ENCODE measurements at regions of chr12 and their contacts with region 1.

Region 1: DNA sequence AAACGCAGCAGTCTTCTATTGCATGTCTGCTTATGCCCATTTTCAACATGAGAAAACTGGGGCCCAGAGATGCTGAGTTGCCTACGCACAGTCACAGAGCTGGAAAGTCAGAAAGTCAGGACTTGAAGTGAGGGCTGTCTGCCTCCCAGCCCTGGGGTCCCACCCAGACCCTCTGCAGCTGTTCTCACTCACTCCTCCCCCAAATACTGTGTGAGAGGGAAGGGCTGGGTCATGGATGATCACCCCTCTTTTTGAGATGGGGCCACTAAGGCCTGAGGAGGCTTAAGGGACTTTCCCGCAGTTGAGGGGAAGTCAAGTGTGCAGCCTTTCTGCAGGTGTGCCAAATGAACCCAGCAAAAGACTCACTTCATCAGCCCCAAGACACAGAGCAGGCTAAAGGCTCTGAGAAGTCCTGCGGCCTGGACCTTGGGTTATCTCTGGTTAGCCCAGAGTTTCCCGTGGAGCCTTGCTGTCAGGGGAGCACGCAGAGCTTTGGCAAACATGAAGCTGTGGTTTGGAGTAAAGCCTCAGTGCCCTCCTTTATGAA is 18.7 kb downstream of the DTX1 start:
- DNase-seq: peak; percentile 84
- CTCF ChIP-seq: no peak

Region 2: GRCh38 chr12:112855375-112855774 is 219.8 kb before region 1 on chr12:
- CTCF ChIA-PET with region 1: no interaction called
- POLR2A ChIA-PET with region 1: no interaction called
- DNase-seq: no peak
- CTCF ChIP-seq: peak; percentile 5

Region 3: GRCh38 chr12:113048716-113049127 is 26.5 kb before region 1 on chr12:
- CTCF ChIA-PET with region 1: interaction called, 135 read pairs
- POLR2A ChIA-PET with region 1: no interaction called
- DNase-seq: peak; percentile 76
- CTCF ChIP-seq: peak; percentile 57

Region 4: GRCh38 chr12:113439606-113440030 is 364.4 kb after region 1 on chr12:
- CTCF ChIA-PET with region 1: no interaction called
- POLR2A ChIA-PET with region 1: no interaction called
- DNase-seq: peak; percentile 53
- CTCF ChIP-seq: peak; percentile 49